Panc1 (cell line): ENCODE measurements at regions of chr16 and their contacts with region 1.

Region 1: DNA sequence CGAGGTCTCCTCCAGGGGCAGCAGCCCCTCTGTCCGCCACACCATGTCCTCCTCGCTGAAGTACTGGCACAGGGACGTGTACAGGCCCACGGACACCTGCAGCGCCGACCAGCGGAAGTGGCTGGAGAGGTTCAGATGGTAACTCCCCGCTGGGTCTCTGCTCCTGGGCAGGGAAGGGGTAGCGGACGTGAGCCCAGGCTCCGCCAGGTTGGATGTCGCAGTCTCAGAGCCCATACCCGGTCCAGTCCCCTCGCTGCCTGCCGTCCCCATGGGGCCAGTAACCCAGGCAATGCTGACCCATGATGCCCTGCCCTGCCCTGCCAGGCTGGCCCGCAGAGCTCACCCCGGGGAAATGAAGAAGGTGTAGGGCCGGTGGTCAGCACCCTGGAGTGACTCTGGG is 33.2 kb downstream of the PKD1 start:
- DNase-seq: no peak
- ATAC-seq: no peak
- H3K4me3 ChIP-seq: no peak overlapping the region
- H3K27ac ChIP-seq: no peak overlapping the region
- H3K4me1 ChIP-seq: no peaks in the 10 kb centered on the region
- H3K27me3 ChIP-seq: no peaks in the 10 kb centered on the region
- CTCF ChIP-seq: no peak

Region 2: GRCh38 chr16:2003827-2004641 is 98.4 kb before region 1 on chr16:
- CTCF ChIA-PET with region 1: no interaction called
- POLR2A ChIA-PET with region 1: no interaction called
- in situ Hi-C with region 1: no loop called
- intact Hi-C with region 1: no loop called
- DNase-seq: no peak
- ATAC-seq: peak; percentile 89
- H3K4me3 ChIP-seq: no peak overlapping the region
- H3K27ac ChIP-seq: peak overlapping the region; percentile 65
- H3K4me1 ChIP-seq: peaks cover 43% of the 10 kb centered on the region
- H3K27me3 ChIP-seq: no peaks in the 10 kb centered on the region
- CTCF ChIP-seq: peak; percentile 99

Region 3: GRCh38 chr16:2081201-2082084 is 21.0 kb before region 1 on chr16:
- CTCF ChIA-PET with region 1: interaction called, 13 read pairs
- POLR2A ChIA-PET with region 1: no interaction called
- in situ Hi-C with region 1: no loop called
- intact Hi-C with region 1: no loop called
- DNase-seq: no peak
- ATAC-seq: no peak
- H3K4me3 ChIP-seq: no peak overlapping the region
- H3K27ac ChIP-seq: no peak overlapping the region
- H3K4me1 ChIP-seq: 0 out of 2 replicates have a peak, but pooled peaks cover 5% of the 10 kb centered on the region
- H3K27me3 ChIP-seq: no peaks in the 10 kb centered on the region
- CTCF ChIP-seq: no peak